GM18951 (cell line): ENCODE measurements at regions of chr14 and their contacts with region 1.

Region 1: GRCh38 chr14:60184146-60184904 is 19.1 kb upstream of the DHRS7 start:
- POLR2A ChIP-seq: no peak

Region 2: GRCh38 chr14:59632381-59632780 is 551.9 kb before region 1 on chr14:
- in situ Hi-C with region 1: loop called (anchors 25 kb)
- POLR2A ChIP-seq: no peak

Region 3: GRCh38 chr14:59964251-59965007 is 219.9 kb before region 1 on chr14:
- in situ Hi-C with region 1: loop called (anchors 10 kb)
- POLR2A ChIP-seq: no peak

Region 4: GRCh38 chr14:60064491-60065072 is 119.7 kb before region 1 on chr14:
- in situ Hi-C with region 1: loop called (anchors 10 kb)
- POLR2A ChIP-seq: no peak

Region 5: GRCh38 chr14:60553808-60554207 is 369.5 kb after region 1 on chr14:
- in situ Hi-C with region 1: loop called (anchors 5 kb)
- POLR2A ChIP-seq: no peak